ENCODE measurements at regions of chr7 and their contacts with region 1.

Region 1: GRCh38 chr7:129468087-129468486 is 33.9 kb downstream of the STRIP2 start:
- DNase-seq: no peak

Region 2: GRCh38 chr7:129218514-129219062 is 249.5 kb before region 1 on chr7:
- intact Hi-C with region 1: loop called (anchors 5 kb)
- DNase-seq: peak; percentile 81

Region 3: DNA sequence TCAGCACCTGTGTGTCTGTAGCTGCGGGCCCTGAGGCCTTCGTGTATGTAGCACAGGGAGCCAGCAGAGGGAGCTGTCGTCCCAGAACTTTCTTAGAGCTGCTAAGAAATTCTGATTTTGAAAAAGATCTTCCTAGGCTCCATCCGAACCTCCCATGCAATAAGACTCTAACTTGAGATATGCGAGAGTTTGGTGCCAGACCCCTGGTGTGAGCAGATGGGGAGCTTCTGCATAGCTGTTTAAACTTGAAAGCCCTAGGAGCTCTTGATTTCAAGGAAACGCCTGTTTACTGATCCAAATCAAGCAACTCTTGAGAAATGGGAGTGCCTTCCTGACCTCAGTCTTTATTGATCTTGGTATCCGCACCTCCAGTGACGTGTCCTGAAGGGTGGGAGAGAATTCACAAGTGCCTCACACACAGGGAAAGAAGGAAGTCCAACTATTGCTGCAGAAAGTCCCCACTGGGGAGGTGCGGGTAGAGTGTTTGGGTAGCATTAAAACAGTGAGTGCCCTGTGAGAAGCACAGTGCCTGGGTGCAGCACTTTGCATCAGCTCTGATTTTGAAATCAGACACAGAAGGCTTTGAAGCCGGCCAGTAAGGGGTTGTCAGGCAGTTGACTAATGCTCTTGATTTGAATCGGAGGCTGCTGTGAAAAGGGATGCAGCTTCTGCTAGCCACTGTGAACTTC is 100.2 kb before region 1 on chr7:
- intact Hi-C with region 1: loop called (anchors 1 kb)
- DNase-seq: peak; percentile 86

Region 4: DNA sequence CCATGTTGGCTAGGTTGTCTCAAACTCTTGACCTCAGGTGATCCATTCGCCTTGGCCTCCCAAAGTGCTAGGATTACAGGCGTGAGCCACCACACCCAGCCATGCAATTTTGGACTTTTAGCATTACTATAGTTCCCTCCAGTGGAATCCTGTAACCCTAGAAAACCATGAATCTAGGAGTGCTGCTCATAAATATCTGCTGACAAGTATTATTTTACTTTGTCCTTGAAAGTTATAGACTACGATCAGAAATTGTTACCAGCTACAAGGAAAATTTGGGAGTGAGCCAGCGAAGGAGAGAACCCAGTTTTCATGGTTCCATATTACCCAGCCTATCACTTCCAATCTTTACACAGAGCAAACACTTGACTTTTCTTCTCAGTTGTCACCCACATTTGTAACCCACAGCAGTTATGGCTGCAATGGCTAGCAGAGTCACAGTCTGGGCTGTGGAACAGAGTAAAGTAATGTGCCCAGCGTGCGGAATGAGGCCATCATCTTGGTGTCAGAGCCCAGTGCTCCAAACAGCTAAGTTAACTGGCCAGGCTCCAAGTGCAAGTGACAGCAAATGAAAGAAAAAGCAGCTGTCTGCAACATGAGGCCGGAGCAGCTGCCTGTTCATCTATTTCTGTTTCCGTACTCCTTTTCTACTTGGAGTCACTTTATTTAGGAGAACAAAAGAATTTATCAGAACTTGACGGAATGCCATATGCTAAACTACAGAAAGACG is 553.2 kb after region 1 on chr7:
- intact Hi-C with region 1: no loop called
- DNase-seq: no peak

Measured in cardiac septum (tissue), 1 donor.